ENCODE measurements at regions of chr15 and their contacts with region 1.

Region 1: GRCh38 chr15:75597667-75598341 is 18.7 kb upstream of the PTPN9 start:
- DNase-seq: no peak
- H3K4me3 ChIP-seq: no peak overlapping the region
- CTCF ChIP-seq: no peak

Region 2: GRCh38 chr15:75453703-75454470 is 143.9 kb before region 1 on chr15:
- CTCF ChIA-PET with region 1: no interaction called
- POLR2A ChIA-PET with region 1: no interaction called
- DNase-seq: peak; percentile 99
- H3K4me3 ChIP-seq: peak overlapping the region; percentile 89
- CTCF ChIP-seq: no peak

Region 3: DNA sequence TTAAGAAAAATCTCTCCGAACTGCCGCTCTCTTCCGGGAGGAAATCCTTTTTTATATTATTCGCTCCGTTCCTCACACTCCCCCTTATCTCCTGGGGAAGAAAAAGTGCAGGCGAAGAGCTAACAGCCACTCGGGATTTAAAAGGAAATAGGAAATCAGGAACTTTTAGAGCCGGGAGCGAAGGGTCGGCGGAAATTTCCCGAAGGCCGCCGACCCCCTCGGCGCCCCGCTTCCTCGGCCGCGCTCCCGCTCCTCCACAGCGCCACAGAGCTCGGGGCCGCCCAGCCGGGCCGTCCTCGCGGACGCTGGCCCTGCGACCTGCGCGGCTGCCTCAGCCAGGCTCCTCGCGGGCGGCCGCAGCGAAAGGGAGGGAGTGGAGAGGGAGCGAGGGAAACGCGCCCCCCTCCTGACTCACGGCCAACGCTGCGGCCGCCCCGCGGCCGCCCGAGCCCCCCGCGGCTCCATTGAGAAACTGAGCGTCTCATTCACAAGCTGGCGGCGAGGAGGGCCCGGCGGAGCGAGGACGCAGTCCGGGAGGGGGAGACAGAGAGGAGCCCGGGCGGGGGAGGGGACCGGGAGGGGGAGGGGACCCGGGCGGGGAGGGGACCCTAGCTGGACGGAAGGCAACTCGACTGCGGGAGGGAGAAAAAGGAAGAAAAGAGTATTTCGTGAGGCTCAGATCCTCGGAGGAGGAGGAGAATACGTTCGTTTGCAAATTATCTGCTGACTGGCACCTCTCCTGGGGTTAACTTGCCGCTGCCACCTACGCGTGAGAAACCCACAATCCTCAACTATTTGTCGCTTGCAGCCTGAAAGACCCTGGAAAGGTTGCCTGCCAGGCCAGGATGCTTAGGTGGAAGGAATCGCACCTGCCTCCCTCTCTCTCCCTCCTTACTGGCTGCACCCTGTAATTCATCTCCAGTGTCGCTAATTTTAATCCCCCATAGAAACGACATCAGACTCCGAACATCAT is 18.6 kb before region 1 on chr15 and contains the start of gene PTPN9:
- CTCF ChIA-PET with region 1: interaction called, 13 read pairs
- POLR2A ChIA-PET with region 1: interaction called, 4 read pairs
- DNase-seq: no peak
- H3K4me3 ChIP-seq: peak within 1 kb of the TSS; percentile 69
- CTCF ChIP-seq: peak; percentile 71